ENCODE measurements at regions of chr6 and their contacts with region 1.

Region 1: GRCh38 chr6:132279592-132280139 is 121.6 kb downstream of the MOXD1 start:
- DNase-seq: peak; percentile 58
- H3K4me3 Mint-ChIP-seq: peak overlapping the region; percentile 75
- H3K27ac Mint-ChIP-seq: no peak overlapping the region
- H3K4me1 Mint-ChIP-seq: no peaks in the 10 kb centered on the region
- H3K27me3 Mint-ChIP-seq: peaks cover 15% of the 10 kb centered on the region

Region 2: GRCh38 chr6:132300323-132300949 is 20.8 kb after region 1 on chr6:
- intact Hi-C with region 1: loop called (anchors 1 kb)
- DNase-seq: no peak
- H3K4me3 Mint-ChIP-seq: no peak overlapping the region
- H3K27ac Mint-ChIP-seq: no peak overlapping the region
- H3K4me1 Mint-ChIP-seq: no peaks in the 10 kb centered on the region
- H3K27me3 Mint-ChIP-seq: peaks cover 17% of the 10 kb centered on the region

Measured in activated T-helper 1 cell treated with anti-CD3 and anti-CD28 coated beads, Interleukin-12 subunit alpha, Interleukin-12 subunit beta, Interleukin-2, Interleukin-4 antibody, amounts not matched to agents 30 ng/mL and 10 ng/mL and 1 ng/mL, durations not matched to agents 14 hours and 24 hours and 36 hours (primary cell).